ENCODE measurements at regions of chr4 and their contacts with region 1.

Region 1: GRCh38 chr4:173505924-173506518 is 24.0 kb downstream of the HAND2 start:
- DNase-seq: peak; percentile 92
- H3K4me3 ChIP-seq: peak overlapping the region in 2 of 4 donors; percentile 20 to 41
- H3K27ac ChIP-seq: peak overlapping the region in 2 of 4 donors; percentile 34 to 43
- H3K4me1 ChIP-seq: peaks cover 17 to 64% (median 57%) of the 10 kb centered on the region in 4 donors
- H3K27me3 ChIP-seq: peaks cover 0 to 69% (median 0%) of the 10 kb centered on the region in 4 donors
- CTCF ChIP-seq: peak; percentile 73 to 83 (median 82)
- EP300 ChIP-seq: no peak
- POLR2A ChIP-seq: no peak

Region 2: GRCh38 chr4:173748353-173748752 is 242.3 kb after region 1 on chr4:
- intact Hi-C with region 1: loop called (anchors 5 kb)
- DNase-seq: no peak
- H3K4me3 ChIP-seq: no peak overlapping the region
- H3K27ac ChIP-seq: peak overlapping the region in 1 of 4 donors; percentile 4
- H3K4me1 ChIP-seq: no peaks in the 10 kb centered on the region
- H3K27me3 ChIP-seq: no peaks in the 10 kb centered on the region
- CTCF ChIP-seq: peak; percentile 32 to 44 (median 36)
- EP300 ChIP-seq: no peak
- POLR2A ChIP-seq: no peak

Region 3: DNA sequence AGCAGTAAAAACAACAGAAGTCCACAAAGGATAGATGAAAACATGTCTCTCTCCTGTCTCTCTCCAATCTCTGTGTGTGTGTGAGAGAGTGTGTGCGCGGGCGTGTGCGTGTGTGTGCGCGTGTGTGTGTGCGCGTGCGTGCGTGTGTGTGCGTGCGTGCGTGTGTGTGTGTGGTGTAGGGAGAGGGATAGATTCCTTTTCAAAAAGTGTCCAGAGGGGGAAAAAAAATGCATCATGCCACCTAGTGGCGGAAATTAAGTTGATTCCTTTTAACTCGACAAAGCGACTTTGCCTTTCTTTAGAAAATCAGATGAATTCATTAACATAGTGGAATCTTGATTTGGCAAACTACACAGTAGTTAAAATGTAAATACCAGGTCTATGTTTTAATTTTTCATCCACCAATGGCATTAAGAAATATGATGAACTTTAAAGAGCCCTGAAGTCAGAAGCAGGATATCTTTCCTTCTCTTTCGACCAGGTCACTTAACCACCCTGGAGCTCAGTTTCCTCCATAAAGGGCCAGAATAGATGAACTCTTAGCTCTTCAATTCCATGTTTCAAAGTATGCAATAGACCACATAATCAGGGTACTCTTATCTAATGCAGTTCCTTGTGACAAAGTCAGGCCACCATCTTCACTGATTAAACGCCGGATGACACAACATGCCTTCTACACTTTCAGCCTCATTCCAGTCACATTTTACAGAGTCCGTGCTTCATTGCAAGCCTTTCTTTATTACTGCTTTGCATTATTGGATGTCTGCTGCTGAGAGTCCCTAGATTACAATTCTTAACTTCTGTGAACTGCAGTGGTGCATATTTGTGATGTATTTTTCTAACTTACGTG is 614.6 kb after region 1 on chr4:
- intact Hi-C with region 1: loop called (anchors 10 kb)
- DNase-seq: no peak
- H3K4me3 ChIP-seq: peak overlapping the region; percentile 45 to 58 (median 56)
- H3K27ac ChIP-seq: peak overlapping the region; percentile 67 to 77 (median 75)
- H3K4me1 ChIP-seq: peaks cover 12 to 48% (median 44%) of the 10 kb centered on the region in 4 donors
- H3K27me3 ChIP-seq: no peaks in the 10 kb centered on the region
- CTCF ChIP-seq: peak; percentile 60 to 66 (median 65)
- EP300 ChIP-seq: no peak
- POLR2A ChIP-seq: no peak